Posterior cingulate gyrus (tissue), 11 donors: ENCODE measurements at regions of chr1 and their contacts with region 1.

Region 1: DNA sequence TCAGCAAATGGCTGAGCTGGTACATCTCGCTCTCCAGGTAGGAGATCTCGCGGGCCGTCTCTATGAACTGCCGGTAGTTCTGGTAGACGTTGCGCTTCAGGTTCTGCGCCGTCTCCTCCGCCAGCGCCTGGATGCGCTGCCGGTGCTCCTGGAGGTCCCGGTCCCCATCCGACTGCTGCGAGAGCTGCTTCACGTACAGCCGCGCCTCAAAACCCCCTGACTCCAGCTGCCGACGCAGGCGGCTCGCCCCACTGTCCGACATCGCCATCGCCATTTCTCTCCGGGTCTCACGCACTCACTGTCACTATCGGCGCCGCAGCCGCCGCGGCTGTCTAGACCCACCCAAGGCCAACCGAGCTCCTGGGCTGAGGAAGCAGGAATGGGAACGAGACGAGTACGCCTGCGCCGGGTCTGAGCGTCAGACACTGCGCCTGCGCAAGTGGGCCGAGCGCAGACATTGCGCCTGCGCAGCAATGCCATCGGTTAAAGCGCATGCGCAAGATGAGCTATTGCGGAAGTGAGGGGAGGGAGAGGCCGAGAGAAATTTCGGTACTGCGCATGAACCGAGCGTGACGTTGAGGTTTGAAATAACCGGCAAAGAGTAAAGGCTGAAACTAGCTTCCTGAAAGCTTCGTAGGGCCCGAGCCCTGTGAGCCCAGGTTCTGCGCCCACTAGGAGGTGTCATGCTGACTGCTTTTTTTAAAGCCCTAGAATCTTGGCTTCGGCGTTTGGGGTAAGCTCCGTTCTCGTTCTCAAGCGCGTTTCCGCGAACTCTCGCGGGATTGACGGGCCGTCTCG is at the start of gene EXOC8:
- DNase-seq: peak; percentile 89 to 99 (median 94)

Region 2: GRCh38 chr1:231240883-231241735 is 96.6 kb before region 1 on chr1 and contains the start of gene GNPAT:
- intact Hi-C with region 1: loop called (anchors 5 kb)
- DNase-seq: peak; percentile 75 to 97 (median 85)

Region 3: DNA sequence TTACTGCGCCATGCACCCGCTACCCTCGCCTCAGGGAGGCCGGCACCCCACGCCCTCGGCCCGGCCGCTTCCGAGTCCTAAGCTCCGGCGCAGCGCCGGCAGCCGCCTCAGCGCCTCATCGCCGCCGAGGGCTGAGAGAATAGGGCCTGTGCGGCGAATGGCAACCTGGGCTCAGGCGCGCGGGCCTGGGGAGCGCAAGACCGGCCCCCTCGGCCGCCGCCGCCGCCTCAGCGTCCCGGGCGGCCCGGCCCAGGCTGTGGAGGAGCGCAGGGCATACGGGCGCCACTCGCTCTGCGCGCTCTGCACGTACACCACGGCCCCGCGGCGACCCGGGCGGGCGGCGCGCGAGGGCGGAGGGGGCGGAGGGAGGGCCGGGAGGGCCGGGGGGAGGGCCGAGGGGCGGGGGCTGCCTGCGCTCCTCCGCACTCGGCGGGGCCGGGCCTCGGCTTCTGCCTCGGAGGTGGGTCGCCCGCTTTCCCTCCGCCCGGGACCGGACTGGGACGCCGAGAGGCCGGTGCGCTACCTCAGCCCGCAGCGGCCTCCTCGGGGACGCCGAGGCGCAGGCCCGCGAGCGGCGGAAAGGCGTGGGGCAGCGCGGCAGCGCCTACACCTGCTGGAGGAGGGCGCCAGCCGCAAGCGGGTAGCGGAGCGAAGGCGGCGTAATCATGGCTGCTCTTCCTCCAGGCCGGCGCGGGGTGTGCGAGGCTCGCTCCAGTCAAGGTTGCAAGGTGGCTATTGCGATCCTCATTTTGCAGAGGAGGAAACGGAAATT is 84.5 kb after region 1 on chr1 and contains the start of gene EGLN1:
- intact Hi-C with region 1: loop called (anchors 2 kb)
- DNase-seq: peak; percentile 60 to 96 (median 76)